Breast epithelium (tissue), 4 donors: ENCODE measurements at regions of chr21 and their contacts with region 1.

Region 1: GRCh38 chr21:44939532-44940115 is at the start of gene SLX9:
- DNase-seq: peak; percentile 58 to 70
- H3K4me3 ChIP-seq: peak within 1 kb of the TSS; percentile 90 to 99 (median 97)
- H3K27ac ChIP-seq: peak within 1 kb of the TSS; percentile 84 to 89
- H3K4me1 ChIP-seq: peaks cover 0 to 5% of the 10 kb centered on the region in 2 donors
- H3K27me3 ChIP-seq: no peaks in the 10 kb centered on the region
- CTCF ChIP-seq: no peak
- POLR2A ChIP-seq: peak; percentile 68
- total RNA-seq, gene SLX9: 15.8 to 17.7 (median 17.0) TPM

Region 2: DNA sequence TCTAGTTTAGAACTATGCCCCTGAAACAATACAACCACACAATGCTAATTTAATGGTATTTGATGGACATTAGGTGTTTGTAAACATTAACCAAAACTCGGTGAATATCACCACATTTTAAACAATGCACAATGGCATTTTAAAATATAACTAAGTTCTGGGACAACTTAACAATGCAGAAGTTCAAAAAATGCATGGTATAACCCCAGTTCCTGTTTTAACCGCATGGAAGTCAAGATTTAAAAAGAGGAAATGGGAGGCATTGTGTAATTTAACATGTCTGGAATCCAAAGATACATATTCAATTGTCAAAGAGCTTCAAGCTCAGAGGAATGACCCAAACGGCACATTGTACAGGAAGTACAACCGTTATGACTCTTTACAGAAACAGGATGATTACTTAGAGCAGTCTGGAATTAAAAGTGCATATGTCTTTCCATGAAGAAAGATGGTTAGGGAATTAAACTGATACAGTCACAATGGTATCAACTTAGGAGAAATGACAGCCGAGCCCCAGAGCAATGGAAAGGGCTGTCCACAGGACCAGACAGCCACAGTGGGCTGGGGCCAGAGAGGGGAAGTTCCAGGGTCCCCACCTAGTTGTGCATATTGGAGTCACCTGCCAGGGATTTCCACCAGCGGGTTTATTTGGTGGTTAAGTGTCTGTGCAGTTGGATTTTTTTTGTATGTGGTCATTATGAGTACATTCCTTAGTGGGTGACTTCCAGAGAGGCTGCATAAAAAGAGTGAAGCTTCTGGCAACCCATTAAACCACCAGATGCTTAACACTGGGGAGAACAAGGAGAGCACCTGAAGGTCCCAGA is 58.6 kb before region 1 on chr21:
- intact Hi-C with region 1: loop called (anchors 10 kb)
- DNase-seq: no peak
- H3K4me3 ChIP-seq: no peak overlapping the region
- H3K27ac ChIP-seq: peak overlapping the region in 1 of 2 donors; percentile 48
- H3K4me1 ChIP-seq: no peaks in the 10 kb centered on the region
- H3K27me3 ChIP-seq: no peaks in the 10 kb centered on the region
- CTCF ChIP-seq: no peak
- POLR2A ChIP-seq: no peak

Region 3: GRCh38 chr21:45794027-45794426 is 854.4 kb after region 1 on chr21:
- intact Hi-C with region 1: no loop called
- DNase-seq: no peak
- H3K4me3 ChIP-seq: no peak overlapping the region
- H3K27ac ChIP-seq: no peak overlapping the region
- H3K4me1 ChIP-seq: no peaks in the 10 kb centered on the region
- H3K27me3 ChIP-seq: peaks cover 0 to 13% of the 10 kb centered on the region in 2 donors
- CTCF ChIP-seq: no peak
- POLR2A ChIP-seq: no peak